H1 (cell line): ENCODE measurements at regions of chr19 and their contacts with region 1.

Region 1: DNA sequence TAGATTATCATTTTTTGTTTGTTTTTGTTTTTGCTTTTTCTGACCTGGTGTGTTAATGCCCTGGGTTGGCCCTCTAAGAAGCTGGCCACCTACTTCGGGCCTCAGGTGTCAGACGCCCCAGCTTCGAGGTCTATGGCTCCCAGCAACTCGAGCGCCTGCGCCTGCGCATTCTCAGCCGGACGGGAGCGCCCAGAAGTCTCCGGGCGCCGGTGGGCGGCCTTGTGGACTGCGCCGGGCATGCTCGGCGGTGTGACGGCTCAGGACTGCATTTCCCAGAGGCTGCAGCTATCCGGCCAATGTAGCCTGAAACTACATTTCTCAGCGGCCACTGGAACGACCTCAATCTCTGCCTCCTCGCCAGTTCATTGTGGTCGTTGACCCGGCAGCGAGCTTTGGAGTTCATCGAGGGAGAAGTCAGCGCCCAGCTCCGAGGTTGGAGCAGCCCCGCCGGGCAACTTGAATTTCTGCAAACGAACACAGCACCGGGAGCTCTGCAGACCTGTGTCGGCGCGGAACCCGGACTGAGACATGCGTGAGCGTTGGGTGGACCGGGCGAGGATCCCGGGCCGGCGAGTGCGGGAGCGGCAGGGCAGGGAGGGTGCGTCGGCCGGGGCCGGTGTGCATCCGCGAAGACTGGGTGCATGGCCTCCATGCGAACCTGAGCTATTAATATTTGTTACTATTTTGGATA is at the start of gene ZNF30:
- DNase-seq: peak; percentile 77 to 90
- H3K4me3 ChIP-seq: peak within 1 kb of the TSS; percentile 57 to 92 (median 83)
- H3K27ac ChIP-seq: no peak within 1 kb of the TSS
- H3K4me1 ChIP-seq: no peaks in the 10 kb centered on the region
- H3K27me3 ChIP-seq: no peaks in the 10 kb centered on the region
- CTCF ChIP-seq: 0 out of 4 replicates have a peak, but pooled peaks of 1 of the 3 experiments have one; percentile 21
- EP300 ChIP-seq: 0 out of 3 replicates have a peak, but pooled peaks of 1 of the 2 experiments have one; percentile 17
- POLR2A ChIP-seq: peak; percentile 41 to 84
- RAD21 ChIP-seq: 0 out of 4 replicates have a peak, but pooled peaks have one; percentile 1 to 2
- total RNA-seq, gene ZNF30: 4.7 TPM in 2 replicates

Region 2: DNA sequence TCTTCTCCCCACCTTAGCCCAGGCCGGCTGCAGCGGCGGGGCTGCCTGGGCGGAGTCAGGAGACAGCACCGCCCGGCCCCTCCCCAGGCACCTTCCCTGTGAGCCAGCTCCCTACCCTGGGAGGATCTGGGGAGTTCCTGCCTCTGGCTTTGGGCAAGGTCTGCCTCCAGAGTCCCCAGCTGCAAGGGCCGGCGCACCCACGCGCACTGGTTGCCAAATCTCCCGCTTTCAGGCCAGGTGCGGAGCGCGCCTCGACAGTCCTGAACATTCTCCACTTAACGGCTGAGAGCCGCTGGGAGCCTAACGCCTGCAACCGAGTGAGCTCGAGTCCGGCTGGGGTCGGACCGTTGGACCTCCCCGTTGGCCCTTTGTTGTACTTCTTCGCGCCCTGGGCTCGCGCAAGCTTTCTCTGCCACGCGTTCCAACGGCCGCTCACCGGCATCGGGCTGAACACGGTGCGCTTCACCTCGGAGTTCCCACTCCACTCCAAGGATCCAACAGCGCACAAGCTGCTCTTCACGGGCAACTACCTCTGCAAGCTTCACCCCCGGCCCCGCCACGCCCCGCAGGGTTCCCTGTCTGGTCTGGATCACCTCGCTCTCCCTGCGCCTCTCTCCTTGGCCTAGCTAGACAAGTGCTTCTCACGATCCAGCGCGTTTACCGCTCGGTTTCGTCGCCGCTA is 21.8 kb before region 1 on chr19:
- CTCF ChIA-PET with region 1: no interaction called
- POLR2A ChIA-PET with region 1: interaction called, 15 read pairs
- DNase-seq: peak in 1 of 2 experiments; percentile 73
- H3K4me3 ChIP-seq: peak overlapping the region; percentile 38 to 62 (median 46)
- H3K27ac ChIP-seq: no peak overlapping the region
- H3K4me1 ChIP-seq: peaks cover 0 to 8% (median 3%) of the 10 kb centered on the region in 4 experiments; a peak in 5 of 7 replicates
- H3K27me3 ChIP-seq: peaks cover 20 to 32% (median 27%) of the 10 kb centered on the region in 4 experiments
- CTCF ChIP-seq: no peak
- EP300 ChIP-seq: no peak
- POLR2A ChIP-seq: peak in 1 of 2 experiments; percentile 34; a peak in 1 of 3 replicates
- RAD21 ChIP-seq: no peak